Activated naive CD4-positive, alpha-beta T cell treated with anti-CD3 and anti-CD28 coated beads, Interleukin-2, amount 10 ng/mL, durations not matched to agents 7 days and 5 days (primary cell): ENCODE measurements at regions of chr6 and their contacts with region 1.

Region 1: GRCh38 chr6:32838114-32838958 is at the start of gene TAP2:
- DNase-seq: peak; percentile 98
- H3K4me3 Mint-ChIP-seq: peak within 1 kb of the TSS; percentile 85
- H3K27ac Mint-ChIP-seq: peak within 1 kb of the TSS; percentile 100
- H3K4me1 Mint-ChIP-seq: peaks cover 86% of the 10 kb centered on the region
- H3K27me3 Mint-ChIP-seq: no peaks in the 10 kb centered on the region

Region 2: GRCh38 chr6:32774426-32774825 is 63.9 kb before region 1 on chr6:
- CTCF ChIA-PET with region 1: no interaction called
- DNase-seq: no peak
- H3K4me3 Mint-ChIP-seq: no peak overlapping the region
- H3K27ac Mint-ChIP-seq: no peak overlapping the region
- H3K4me1 Mint-ChIP-seq: peaks cover 2% of the 10 kb centered on the region
- H3K27me3 Mint-ChIP-seq: peaks cover 37% of the 10 kb centered on the region

Region 3: DNA sequence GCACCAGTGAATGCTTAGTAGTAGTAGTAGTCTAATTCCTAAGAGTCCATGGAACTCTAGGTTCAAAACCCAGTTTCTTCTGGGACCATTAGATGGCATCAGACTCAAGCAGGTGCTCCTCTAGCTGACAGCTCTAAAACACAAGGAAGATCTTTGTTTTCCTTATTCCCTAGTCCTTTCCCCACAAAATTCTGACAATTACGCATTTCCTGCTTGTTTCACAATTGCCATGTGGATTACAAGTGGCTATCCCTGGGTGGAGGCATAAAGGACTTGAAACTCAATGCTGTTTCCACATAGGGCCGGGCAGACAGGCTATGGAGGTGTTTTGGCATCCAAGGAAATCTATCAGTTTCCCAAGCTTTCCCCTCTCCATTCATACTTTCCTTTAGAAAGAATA is 12.4 kb before region 1 on chr6:
- CTCF ChIA-PET with region 1: interaction called, 22 read pairs
- DNase-seq: no peak
- H3K4me3 Mint-ChIP-seq: no peak overlapping the region
- H3K27ac Mint-ChIP-seq: no peak overlapping the region
- H3K4me1 Mint-ChIP-seq: peaks cover 22% of the 10 kb centered on the region
- H3K27me3 Mint-ChIP-seq: no peaks in the 10 kb centered on the region

Region 4: GRCh38 chr6:32853541-32854375 is 15.4 kb after region 1 on chr6 and contains the starts of genes PSMB9 and TAP1:
- CTCF ChIA-PET with region 1: interaction called, 158 read pairs
- DNase-seq: peak; percentile 98
- H3K4me3 Mint-ChIP-seq: peak within 1 kb of the TSS; percentile 96
- H3K27ac Mint-ChIP-seq: peak within 1 kb of the TSS; percentile 99
- H3K4me1 Mint-ChIP-seq: peaks cover 63% of the 10 kb centered on the region
- H3K27me3 Mint-ChIP-seq: no peaks in the 10 kb centered on the region

Region 5: GRCh38 chr6:32971581-32972352 is 133.4 kb after region 1 on chr6:
- CTCF ChIA-PET with region 1: interaction called, 14 read pairs
- DNase-seq: peak; percentile 99
- H3K4me3 Mint-ChIP-seq: peak overlapping the region; percentile 85
- H3K27ac Mint-ChIP-seq: peak overlapping the region; percentile 97
- H3K4me1 Mint-ChIP-seq: peaks cover 25% of the 10 kb centered on the region
- H3K27me3 Mint-ChIP-seq: peaks cover 10% of the 10 kb centered on the region

Region 6: GRCh38 chr6:33217681-33218080 is 379.3 kb after region 1 on chr6:
- CTCF ChIA-PET with region 1: no interaction called
- DNase-seq: no peak
- H3K4me3 Mint-ChIP-seq: no peak overlapping the region
- H3K27ac Mint-ChIP-seq: no peak overlapping the region
- H3K4me1 Mint-ChIP-seq: peaks cover 18% of the 10 kb centered on the region
- H3K27me3 Mint-ChIP-seq: peaks cover 75% of the 10 kb centered on the region